ENCODE measurements at regions of chr11 and their contacts with region 1.

Region 1: GRCh38 chr11:93784152-93784934 is at the start of gene MED17:
- DNase-seq: peak; percentile 84 to 96 (median 94)
- H3K4me3 ChIP-seq: peak within 1 kb of the TSS; percentile 72 to 100 (median 93)
- H3K27ac ChIP-seq: peak within 1 kb of the TSS; percentile 20 to 97 (median 90)
- H3K27me3 ChIP-seq: no peaks in the 10 kb centered on the region
- CTCF ChIP-seq: peak in 54 of 56 donors; percentile 12 to 77 (median 60)
- total RNA-seq, gene MED17: 23.9 to 45.0 (median 35.8) TPM

Region 2: DNA sequence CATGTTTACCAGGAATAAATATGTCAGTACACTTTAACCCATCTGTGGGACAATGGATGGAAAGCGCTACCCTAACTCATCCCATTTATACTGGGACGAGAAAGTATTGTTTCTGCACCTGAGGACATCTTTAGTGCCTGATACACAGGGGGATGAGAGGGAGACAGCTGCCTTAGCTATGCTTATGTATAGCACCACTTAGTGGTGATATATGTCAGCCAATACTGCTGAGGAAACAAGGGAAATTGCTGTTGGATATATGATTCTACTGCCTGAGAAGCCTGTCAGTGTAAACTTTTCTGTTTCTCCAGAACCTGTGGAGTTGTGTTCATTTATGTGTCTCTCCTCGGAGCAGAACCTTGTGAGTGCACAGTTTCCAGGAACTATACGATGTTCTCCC is 136.2 kb before region 1 on chr11:
- intact Hi-C with region 1: no loop called
- DNase-seq: no peak
- H3K4me3 ChIP-seq: no peak overlapping the region
- H3K27ac ChIP-seq: no peak overlapping the region
- H3K27me3 ChIP-seq: peaks cover 0 to 2% (median 0%) of the 10 kb centered on the region in 45 donors
- CTCF ChIP-seq: peak in 5 of 56 donors; percentile 5 to 26 (median 14)

Region 3: DNA sequence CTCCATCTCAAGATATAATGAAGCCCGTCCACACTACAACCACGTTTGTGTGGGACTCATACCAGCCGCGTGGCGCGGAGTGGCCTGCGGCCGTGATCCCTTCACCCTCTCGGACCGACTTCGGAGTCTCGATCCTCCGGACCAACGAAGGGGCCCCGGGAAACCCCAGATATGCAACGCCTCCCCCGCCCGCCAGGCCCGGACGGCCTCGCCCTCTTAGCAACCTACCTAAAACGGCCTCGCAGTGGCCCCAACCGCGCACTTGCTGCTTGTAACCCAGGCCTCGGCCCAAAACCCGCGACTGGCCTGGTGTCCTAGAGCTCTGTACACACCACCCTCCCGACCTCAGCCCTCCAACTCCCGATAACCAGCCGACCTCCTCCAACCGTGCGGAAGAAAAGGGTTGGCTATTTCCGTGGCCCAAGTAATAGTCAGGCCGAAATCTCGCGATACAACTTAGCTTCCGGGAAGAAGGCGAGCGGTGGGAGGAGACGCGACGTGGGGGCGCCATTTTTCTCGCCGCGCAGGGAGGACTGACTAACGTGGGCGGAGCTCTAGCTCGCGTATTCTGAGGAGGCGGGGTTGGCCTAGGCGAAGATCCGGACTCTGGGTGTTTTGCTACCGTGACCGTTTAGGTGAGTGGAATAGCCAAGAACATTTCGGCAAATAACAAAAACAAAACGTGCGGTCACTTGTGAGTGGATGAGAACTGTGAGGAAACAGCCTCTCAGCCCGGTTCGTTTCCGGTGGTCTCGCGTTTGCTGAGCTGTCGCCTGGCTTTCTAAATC is 43.1 kb before region 1 on chr11 and contains the starts of genes C11orf54 and TAF1D:
- intact Hi-C with region 1: loop called (anchors 2 kb)
- DNase-seq: peak; percentile 89 to 97 (median 96)
- H3K4me3 ChIP-seq: peak within 1 kb of the TSS; percentile 42 to 96 (median 84)
- H3K27ac ChIP-seq: peak within 1 kb of the TSS; percentile 52 to 96 (median 89)
- H3K27me3 ChIP-seq: no peaks in the 10 kb centered on the region
- CTCF ChIP-seq: peak in 38 of 56 donors; percentile 2 to 67 (median 35)
- total RNA-seq, gene C11orf54: 23.5 to 54.6 (median 37.3) TPM
- total RNA-seq, gene TAF1D: 75.7 to 158 (median 117) TPM

Measured in dorsolateral prefrontal cortex (tissue), 120 donors.